ENCODE measurements at regions of chr18 and their contacts with region 1.

Region 1: DNA sequence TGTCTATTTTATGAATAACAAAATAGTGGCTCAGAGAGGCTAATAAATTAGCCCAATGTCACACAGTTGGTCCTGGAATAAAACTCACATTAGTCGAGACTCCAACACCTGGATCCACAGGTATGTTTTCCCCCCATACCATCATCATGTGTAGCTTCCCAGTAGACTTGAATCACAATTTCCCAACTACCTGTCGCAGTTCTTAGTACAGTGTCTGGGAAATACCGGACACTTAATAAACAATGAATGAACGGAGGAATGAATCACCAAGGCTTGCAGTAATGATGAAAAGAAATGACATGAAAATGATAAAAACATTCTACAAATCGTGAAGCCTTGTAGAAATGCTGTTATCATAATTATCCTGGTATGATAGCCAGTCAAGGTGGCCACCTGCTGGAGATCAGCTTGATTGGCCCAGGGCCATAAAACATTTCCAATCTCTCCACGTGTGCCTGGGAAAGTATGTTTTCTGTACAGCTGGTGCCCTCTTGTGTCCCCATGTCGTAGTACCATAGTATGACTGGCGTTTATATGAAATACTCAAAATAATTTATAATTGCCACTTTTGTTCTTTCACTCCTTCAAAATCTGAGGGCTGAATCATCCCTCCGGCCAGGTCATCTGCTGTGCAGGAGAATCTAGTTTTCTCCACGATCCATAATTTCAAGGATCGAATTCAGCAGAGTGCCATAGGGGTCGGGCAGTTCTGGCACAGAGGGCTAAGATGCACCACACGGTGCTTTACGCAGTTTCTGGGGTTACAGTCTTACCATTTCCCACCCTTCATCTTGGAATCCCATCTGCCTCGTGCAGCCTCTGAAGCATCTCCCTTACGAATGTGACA is 95.4 kb downstream of the LAMA1 start:
- DNase-seq: peak; percentile 84
- H3K4me3 Mint-ChIP-seq: no peak overlapping the region
- H3K27ac Mint-ChIP-seq: peak overlapping the region; percentile 39
- H3K4me1 Mint-ChIP-seq: no peaks in the 10 kb centered on the region
- H3K27me3 Mint-ChIP-seq: no peaks in the 10 kb centered on the region
- CTCF ChIP-seq: peak; percentile 72

Region 2: GRCh38 chr18:7000484-7001096 is 21.6 kb before region 1 on chr18:
- CTCF ChIA-PET with region 1: interaction called, 42 read pairs
- POLR2A ChIA-PET with region 1: no interaction called
- intact Hi-C with region 1: loop called (anchors 1 kb)
- DNase-seq: peak; percentile 42
- H3K4me3 Mint-ChIP-seq: no peak overlapping the region
- H3K27ac Mint-ChIP-seq: no peak overlapping the region
- H3K4me1 Mint-ChIP-seq: no peaks in the 10 kb centered on the region
- H3K27me3 Mint-ChIP-seq: no peaks in the 10 kb centered on the region
- CTCF ChIP-seq: peak; percentile 40

Region 3: DNA sequence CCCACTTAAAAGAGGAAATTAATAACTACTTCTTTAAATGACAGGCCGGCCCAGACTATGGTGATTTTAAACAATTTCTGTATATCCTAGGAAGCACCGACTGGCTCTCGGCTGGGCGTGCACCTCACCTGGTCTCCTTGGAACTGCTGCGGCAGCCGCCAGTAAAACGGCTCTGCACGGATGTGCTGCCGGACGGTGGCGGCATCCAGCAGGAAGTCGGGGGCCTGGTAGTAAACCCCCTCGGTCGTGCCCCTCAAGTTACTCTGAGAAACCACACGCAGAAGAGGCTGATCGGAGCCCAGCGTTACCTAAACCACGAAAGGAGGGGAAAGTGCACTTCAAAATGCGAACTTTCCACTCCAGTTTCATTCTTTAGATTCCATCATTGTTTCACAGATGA is 11.0 kb before region 1 on chr18:
- CTCF ChIA-PET with region 1: interaction called, 42 read pairs
- POLR2A ChIA-PET with region 1: no interaction called
- intact Hi-C with region 1: no loop called
- DNase-seq: no peak
- H3K4me3 Mint-ChIP-seq: no peak overlapping the region
- H3K27ac Mint-ChIP-seq: no peak overlapping the region
- H3K4me1 Mint-ChIP-seq: no peaks in the 10 kb centered on the region
- H3K27me3 Mint-ChIP-seq: no peaks in the 10 kb centered on the region
- CTCF ChIP-seq: no peak

Region 4: DNA sequence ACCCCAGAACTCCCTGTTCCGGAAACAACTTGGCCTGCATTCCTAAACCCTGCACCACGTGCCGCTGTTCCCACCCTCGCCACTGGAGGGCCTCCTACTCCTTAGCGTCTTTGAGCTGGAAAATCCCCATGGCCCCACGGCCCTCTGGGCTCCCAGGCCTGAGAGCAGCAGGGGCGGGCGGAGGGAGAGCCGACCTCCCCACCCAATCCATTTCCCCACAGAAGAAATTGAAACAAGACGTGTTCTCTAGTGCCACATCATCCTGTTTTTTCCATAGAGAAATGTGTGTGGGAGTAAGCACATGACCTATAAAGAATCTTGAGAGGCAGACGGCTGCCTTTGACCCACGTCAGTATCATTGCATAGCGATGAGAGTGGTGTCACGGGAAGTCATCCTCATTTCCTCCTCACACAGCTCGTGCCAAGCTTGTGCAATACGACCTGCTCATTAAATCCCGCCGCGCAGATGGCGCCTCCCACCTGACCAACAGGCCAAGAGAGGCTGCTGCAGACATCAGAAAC is 16.2 kb after region 1 on chr18:
- CTCF ChIA-PET with region 1: interaction called, 31 read pairs
- POLR2A ChIA-PET with region 1: interaction called, 3 read pairs
- intact Hi-C with region 1: no loop called
- DNase-seq: peak; percentile 97
- H3K4me3 Mint-ChIP-seq: peak overlapping the region; percentile 50
- H3K27ac Mint-ChIP-seq: peak overlapping the region; percentile 85
- H3K4me1 Mint-ChIP-seq: peaks cover 7% of the 10 kb centered on the region
- H3K27me3 Mint-ChIP-seq: no peaks in the 10 kb centered on the region
- CTCF ChIP-seq: peak; percentile 75